Activated CD4-positive, alpha-beta memory T cell treated with anti-CD3 and anti-CD28 coated beads, Interleukin-2, amount 10 ng/mL, durations not matched to agents 7 days and 5 days (primary cell): ENCODE measurements at regions of chr1 and their contacts with region 1.

Region 1: GRCh38 chr1:25819576-25820246 is at the start of gene MTFR1L:
- DNase-seq: peak; percentile 95
- H3K4me3 Mint-ChIP-seq: peak within 1 kb of the TSS; percentile 96
- H3K27ac Mint-ChIP-seq: peak within 1 kb of the TSS; percentile 93
- H3K4me1 Mint-ChIP-seq: peaks cover 38% of the 10 kb centered on the region
- H3K27me3 Mint-ChIP-seq: no peaks in the 10 kb centered on the region
- total RNA-seq, gene MTFR1L: 36.6 to 37.7 TPM

Region 2: DNA sequence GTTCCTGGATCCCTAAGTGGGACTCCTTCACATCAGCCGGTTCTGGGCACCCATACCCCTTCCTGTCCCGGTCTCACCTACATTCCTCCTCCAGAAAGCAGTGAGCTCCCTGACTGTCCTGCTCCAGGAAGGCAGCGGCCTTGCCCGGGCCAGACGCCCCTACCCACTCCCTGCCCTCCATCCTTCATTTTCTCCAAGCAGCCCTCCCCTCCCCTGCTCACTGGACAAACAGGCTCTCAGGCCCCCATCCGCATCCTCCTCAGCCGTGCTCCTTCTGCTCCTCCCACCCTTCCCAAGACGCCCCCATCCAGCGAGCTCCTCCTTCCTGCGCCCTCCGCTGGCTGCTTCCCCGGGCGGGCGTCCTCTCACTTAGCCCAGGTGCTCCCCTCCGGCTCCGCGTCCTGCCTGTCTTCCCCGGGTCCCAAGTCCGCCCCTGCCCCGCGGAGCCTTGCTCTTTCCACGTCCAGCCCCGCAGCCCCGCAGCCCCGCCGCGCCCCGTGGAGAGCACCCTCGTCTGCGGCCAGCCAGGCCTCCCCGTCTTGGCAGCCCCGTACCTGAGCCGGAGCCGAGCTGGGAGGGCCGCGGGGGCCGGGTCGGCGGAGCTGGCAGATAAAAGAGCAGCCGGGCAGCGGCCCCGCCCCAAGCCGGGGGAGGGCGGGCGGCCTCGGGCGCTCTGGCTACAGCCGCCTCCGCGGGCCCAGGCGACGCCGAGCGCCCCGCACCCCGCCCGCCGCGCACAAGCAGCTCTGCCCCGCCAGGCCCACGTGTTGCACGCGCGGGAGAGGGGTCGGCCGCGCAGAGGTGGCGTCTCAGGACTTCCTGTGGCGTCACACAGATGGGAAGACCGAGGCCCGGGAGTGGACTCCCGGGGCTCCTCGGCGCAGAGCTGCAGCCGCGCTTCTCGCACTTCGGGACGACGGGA is 55.5 kb after region 1 on chr1 and contains the start of gene PAQR7:
- CTCF ChIA-PET with region 1: no interaction called
- POLR2A ChIA-PET with region 1: no interaction called
- DNase-seq: peak; percentile 61
- H3K4me3 Mint-ChIP-seq: peak within 1 kb of the TSS; percentile 69
- H3K27ac Mint-ChIP-seq: no peak within 1 kb of the TSS
- H3K4me1 Mint-ChIP-seq: peaks cover 7% of the 10 kb centered on the region
- H3K27me3 Mint-ChIP-seq: peaks cover 20% of the 10 kb centered on the region
- total RNA-seq, gene PAQR7: 1.4 TPM

Region 3: GRCh38 chr1:25997828-25998761 is 178.4 kb after region 1 on chr1 and contains the start of gene PAFAH2:
- CTCF ChIA-PET with region 1: interaction called, 11 read pairs
- POLR2A ChIA-PET with region 1: interaction called, 15 read pairs
- DNase-seq: peak; percentile 97
- H3K4me3 Mint-ChIP-seq: peak within 1 kb of the TSS; percentile 84
- H3K27ac Mint-ChIP-seq: peak within 1 kb of the TSS; percentile 91
- H3K4me1 Mint-ChIP-seq: peaks cover 20% of the 10 kb centered on the region
- H3K27me3 Mint-ChIP-seq: no peaks in the 10 kb centered on the region
- total RNA-seq, gene PAFAH2: 9.4 to 10.1 TPM